Activated T-helper 2 cell treated with anti-CD3 and anti-CD28 coated beads, Interferon-gamma antibody, Interleukin-2, Interleukin-4, amounts not matched to agents 10 μg/mL and 5 μg/mL and 100 μg/mL, durations not matched to agents 14 hours and 24 hours and 36 hours (primary cell): ENCODE measurements at regions of chr12 and their contacts with region 1.

Region 1: GRCh38 chr12:109844983-109845823 is 12.0 kb upstream of the TRPV4 start:
- DNase-seq: peak; percentile 82
- H3K4me3 Mint-ChIP-seq: peak overlapping the region; percentile 40
- H3K27ac Mint-ChIP-seq: no peak overlapping the region
- H3K4me1 Mint-ChIP-seq: peaks cover 3% of the 10 kb centered on the region
- H3K27me3 Mint-ChIP-seq: peaks cover under 1% of the 10 kb centered on the region

Region 2: DNA sequence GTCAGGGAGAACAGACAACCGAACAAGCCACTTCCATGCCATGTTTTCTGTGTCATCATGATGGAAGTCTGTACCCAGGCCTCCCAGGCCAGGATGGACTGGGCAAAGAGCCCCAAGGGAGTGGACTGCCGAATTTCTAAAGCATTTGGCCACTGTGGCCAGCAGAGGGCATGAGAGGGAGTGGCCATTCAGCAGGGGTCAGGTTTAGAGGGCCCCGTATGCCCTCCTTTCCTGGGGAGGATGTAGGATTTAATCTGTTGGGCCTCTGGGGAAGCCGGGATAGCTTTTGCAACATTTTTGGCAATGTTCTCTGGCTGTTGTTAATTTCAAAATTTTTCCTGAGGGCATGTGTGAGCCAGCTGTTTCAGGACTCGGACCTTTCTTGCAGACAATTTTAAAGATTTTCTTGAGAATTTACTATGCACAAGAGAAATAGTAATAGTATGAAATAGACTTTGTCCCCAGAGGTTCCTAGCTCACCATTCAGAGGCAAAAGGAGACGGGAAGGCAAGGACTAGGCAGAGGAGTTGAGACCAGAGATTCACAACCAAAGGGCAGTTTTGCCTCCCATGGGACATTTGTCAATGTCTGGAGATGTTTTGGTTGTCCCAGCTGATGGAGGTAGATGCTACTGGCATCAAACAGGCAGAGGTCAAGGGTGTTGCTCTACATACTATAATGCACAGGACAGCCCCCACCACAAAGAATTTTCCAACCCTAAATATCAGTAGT is 710.9 kb before region 1 on chr12:
- intact Hi-C with region 1: no loop called
- DNase-seq: no peak
- H3K4me3 Mint-ChIP-seq: no peak overlapping the region
- H3K27ac Mint-ChIP-seq: no peak overlapping the region
- H3K4me1 Mint-ChIP-seq: no peaks in the 10 kb centered on the region
- H3K27me3 Mint-ChIP-seq: peaks cover 6% of the 10 kb centered on the region

Region 3: GRCh38 chr12:109804820-109805761 is 40.1 kb before region 1 on chr12:
- intact Hi-C with region 1: loop called (anchors 1 kb)
- DNase-seq: peak; percentile 48
- H3K4me3 Mint-ChIP-seq: no peak overlapping the region
- H3K27ac Mint-ChIP-seq: no peak overlapping the region
- H3K4me1 Mint-ChIP-seq: no peaks in the 10 kb centered on the region
- H3K27me3 Mint-ChIP-seq: no peaks in the 10 kb centered on the region

Region 4: DNA sequence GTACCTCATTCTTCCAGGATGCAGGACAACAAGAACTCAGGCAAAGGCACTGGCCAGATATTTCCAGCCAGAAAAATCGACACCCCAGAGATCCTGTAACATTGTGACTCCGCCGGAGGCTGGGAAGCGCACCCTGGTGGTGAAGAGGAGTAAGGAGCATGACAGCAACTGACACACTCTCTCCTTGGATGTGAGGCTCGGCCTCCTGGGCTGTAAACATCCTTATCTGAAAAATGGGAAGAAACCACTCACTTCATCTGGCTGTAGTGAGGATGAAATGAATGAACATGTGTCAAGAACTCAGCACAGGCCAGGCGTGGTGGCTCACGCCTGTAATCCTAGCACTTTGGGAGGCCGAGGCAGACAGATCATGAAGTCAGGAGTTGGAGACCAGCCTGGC is 82.4 kb after region 1 on chr12:
- intact Hi-C with region 1: loop called (anchors 5 kb)
- DNase-seq: peak; percentile 16
- H3K4me3 Mint-ChIP-seq: no peak overlapping the region
- H3K27ac Mint-ChIP-seq: no peak overlapping the region
- H3K4me1 Mint-ChIP-seq: no peaks in the 10 kb centered on the region
- H3K27me3 Mint-ChIP-seq: no peaks in the 10 kb centered on the region